Activated CD4-positive, alpha-beta T cell treated with anti-CD3 and anti-CD28 coated beads for 36 hours (primary cell): ENCODE measurements at regions of chr7 and their contacts with region 1.

Region 1: DNA sequence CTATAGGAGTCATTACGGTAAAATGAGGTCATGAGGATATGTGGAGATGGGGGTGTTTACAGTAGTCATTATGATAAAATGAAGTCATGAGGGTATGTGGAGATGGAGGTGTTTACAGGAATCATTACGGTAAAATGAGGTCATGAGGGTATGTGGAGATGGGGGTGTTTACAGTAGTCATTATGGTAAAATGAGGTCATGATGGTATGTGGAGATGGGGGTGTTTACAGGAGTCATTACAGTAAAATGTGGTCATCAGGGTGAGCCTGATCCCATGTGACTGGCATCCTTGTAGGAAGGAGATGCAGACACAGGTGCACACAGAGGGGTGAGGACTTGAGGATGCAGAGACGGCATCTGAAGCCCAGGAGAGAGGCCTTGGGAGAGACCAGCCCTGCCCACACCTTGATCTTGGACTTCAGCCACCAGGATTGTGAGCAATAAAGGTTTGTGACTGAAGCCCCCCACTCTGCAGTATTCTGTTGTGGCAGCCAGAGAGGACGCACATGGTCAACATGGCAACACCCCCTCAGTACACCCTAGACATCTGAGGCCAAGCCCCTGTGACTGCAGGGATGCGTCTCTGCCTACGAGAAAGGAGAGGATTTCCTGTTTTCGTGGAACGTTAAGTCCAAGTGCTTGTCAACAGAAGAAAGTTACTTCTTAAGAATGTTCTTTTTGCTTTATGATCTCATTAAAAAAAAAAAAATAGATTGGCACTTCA is 544.4 kb downstream of the DNAJB6 start:
- DNase-seq: peak; percentile 36
- ATAC-seq: peak; percentile 85
- H3K4me3 Mint-ChIP-seq: no peak overlapping the region
- H3K27ac Mint-ChIP-seq: peak overlapping the region; percentile 28
- H3K4me1 Mint-ChIP-seq: peaks cover 9% of the 10 kb centered on the region
- H3K27me3 Mint-ChIP-seq: no peaks in the 10 kb centered on the region

Region 2: DNA sequence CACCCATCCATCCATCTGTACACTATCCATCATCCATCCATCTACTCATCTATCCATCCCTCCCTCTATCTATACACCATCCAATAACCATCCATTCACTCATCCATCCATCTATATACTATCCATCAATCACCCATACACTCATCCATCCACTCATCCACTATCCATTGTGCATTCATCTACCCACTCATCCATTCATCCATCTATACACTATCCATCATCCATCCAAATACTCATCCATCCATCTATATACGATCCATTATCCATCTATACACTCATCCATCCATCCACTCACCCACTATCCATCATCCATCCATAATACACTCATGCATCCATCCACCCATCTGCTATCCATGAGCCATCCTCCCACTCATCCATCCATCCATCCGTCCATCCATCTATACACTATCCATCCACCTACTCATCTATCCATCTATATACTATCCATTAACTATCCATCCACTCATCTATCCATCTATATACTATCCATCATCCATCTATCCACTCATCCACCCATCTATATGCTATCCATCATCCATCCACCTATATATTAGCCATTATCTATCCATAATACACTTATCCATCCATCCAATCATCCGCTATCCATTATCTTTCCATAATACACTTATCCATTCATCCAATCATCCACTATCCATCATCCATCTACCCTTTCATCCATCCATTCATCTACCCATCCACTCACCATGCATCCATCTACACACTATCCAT is 59.1 kb before region 1 on chr7:
- CTCF ChIA-PET with region 1: no interaction called
- POLR2A ChIA-PET with region 1: no interaction called
- intact Hi-C with region 1: loop called (anchors 2 to 5 kb)
- DNase-seq: no peak
- ATAC-seq: no peak
- H3K4me3 Mint-ChIP-seq: no peak overlapping the region
- H3K27ac Mint-ChIP-seq: no peak overlapping the region
- H3K4me1 Mint-ChIP-seq: peaks cover 22% of the 10 kb centered on the region
- H3K27me3 Mint-ChIP-seq: no peaks in the 10 kb centered on the region

Region 3: GRCh38 chr7:157932498-157933218 is 51.4 kb after region 1 on chr7:
- CTCF ChIA-PET with region 1: no interaction called
- POLR2A ChIA-PET with region 1: no interaction called
- intact Hi-C with region 1: loop called in 1 of 2 experiments (anchors 2 kb)
- DNase-seq: peak; percentile 43
- ATAC-seq: peak; percentile 77
- H3K4me3 Mint-ChIP-seq: peak overlapping the region; percentile 54
- H3K27ac Mint-ChIP-seq: peak overlapping the region; percentile 94
- H3K4me1 Mint-ChIP-seq: no peaks in the 10 kb centered on the region
- H3K27me3 Mint-ChIP-seq: peaks cover 2% of the 10 kb centered on the region